CD14-positive monocyte (primary cell): ENCODE measurements at regions of chr1 and their contacts with region 1.

Region 1: GRCh38 chr1:25858906-25859789 is at the start of gene AUNIP:
- DNase-seq: peak; percentile 80 to 87 (median 86)
- H3K4me3 ChIP-seq: peak within 1 kb of the TSS; percentile 64 to 89 (median 80)
- H3K4me3 Mint-ChIP-seq: peak within 1 kb of the TSS; percentile 92 to 94
- H3K27ac ChIP-seq: peak within 1 kb of the TSS; percentile 91 to 99
- H3K27ac Mint-ChIP-seq: peak within 1 kb of the TSS; percentile 96 to 99 (median 98)
- H3K4me1 ChIP-seq: peaks cover 35 to 53% of the 10 kb centered on the region in 2 donors
- H3K4me1 Mint-ChIP-seq: peaks cover 44% of the 10 kb centered on the region
- H3K27me3 ChIP-seq: no peaks in the 10 kb centered on the region
- H3K27me3 Mint-ChIP-seq: peaks cover 0 to 2% (median 0%) of the 10 kb centered on the region in 3 donors
- CTCF ChIP-seq: no peak
- polyA plus RNA-seq, gene AUNIP: 0.19 to 0.44 (median 0.44) TPM

Region 2: GRCh38 chr1:25796811-25797458 is 62.2 kb before region 1 on chr1:
- intact Hi-C with region 1: no loop called
- DNase-seq: peak; percentile 58 to 67 (median 59)
- H3K4me3 ChIP-seq: no peak overlapping the region
- H3K4me3 Mint-ChIP-seq: peak overlapping the region; percentile 1 to 54
- H3K27ac ChIP-seq: no peak overlapping the region
- H3K27ac Mint-ChIP-seq: peak overlapping the region in 2 of 7 donors; percentile 33 to 50
- H3K4me1 ChIP-seq: peaks cover 13 to 16% of the 10 kb centered on the region in 2 donors
- H3K4me1 Mint-ChIP-seq: peaks cover 28% of the 10 kb centered on the region
- H3K27me3 ChIP-seq: no peaks in the 10 kb centered on the region
- H3K27me3 Mint-ChIP-seq: peaks cover 2 to 3% (median 2%) of the 10 kb centered on the region in 3 donors
- CTCF ChIP-seq: peak; percentile 71

Region 3: GRCh38 chr1:25819576-25820246 is 39.4 kb before region 1 on chr1 and contains the start of gene MTFR1L:
- intact Hi-C with region 1: loop called in 1 of 2 experiments (anchors 5 kb)
- DNase-seq: peak; percentile 51 to 75 (median 58)
- H3K4me3 ChIP-seq: peak within 1 kb of the TSS; percentile 70 to 93 (median 88)
- H3K4me3 Mint-ChIP-seq: peak within 1 kb of the TSS; percentile 97 to 98
- H3K27ac ChIP-seq: peak within 1 kb of the TSS; percentile 82 to 87
- H3K27ac Mint-ChIP-seq: peak within 1 kb of the TSS; percentile 91 to 98 (median 95)
- H3K4me1 ChIP-seq: peaks cover 20 to 33% of the 10 kb centered on the region in 2 donors
- H3K4me1 Mint-ChIP-seq: peaks cover 36% of the 10 kb centered on the region
- H3K27me3 ChIP-seq: no peaks in the 10 kb centered on the region
- H3K27me3 Mint-ChIP-seq: peaks cover 0 to 4% (median 3%) of the 10 kb centered on the region in 3 donors
- CTCF ChIP-seq: no peak
- polyA plus RNA-seq, gene MTFR1L: 67.3 to 73.5 (median 69.9) TPM

Region 4: GRCh38 chr1:26210147-26210870 is 351.2 kb after region 1 on chr1:
- intact Hi-C with region 1: no loop called
- DNase-seq: no peak
- H3K4me3 ChIP-seq: no peak overlapping the region
- H3K4me3 Mint-ChIP-seq: no peak overlapping the region
- H3K27ac ChIP-seq: no peak overlapping the region
- H3K27ac Mint-ChIP-seq: no peak overlapping the region
- H3K4me1 ChIP-seq: no peaks in the 10 kb centered on the region
- H3K4me1 Mint-ChIP-seq: no peaks in the 10 kb centered on the region
- H3K27me3 ChIP-seq: no peaks in the 10 kb centered on the region
- H3K27me3 Mint-ChIP-seq: peaks cover 2 to 7% (median 2%) of the 10 kb centered on the region in 3 donors
- CTCF ChIP-seq: no peak